ENCODE measurements at regions of chr22 and their contacts with region 1.

Region 1: GRCh38 chr22:24407278-24407665 is 20.1 kb upstream of the ADORA2A start:
- DNase-seq: no peak
- H3K4me3 ChIP-seq: no peak overlapping the region
- CTCF ChIP-seq: no peak

Region 2: GRCh38 chr22:24315367-24315966 is 91.8 kb before region 1 on chr22:
- in situ Hi-C with region 1: no loop called
- DNase-seq: peak; percentile 69
- H3K4me3 ChIP-seq: no peak overlapping the region
- CTCF ChIP-seq: no peak

Region 3: GRCh38 chr22:24355574-24355973 is 51.7 kb before region 1 on chr22:
- in situ Hi-C with region 1: no loop called
- DNase-seq: no peak
- H3K4me3 ChIP-seq: no peak overlapping the region
- CTCF ChIP-seq: no peak

Region 4: DNA sequence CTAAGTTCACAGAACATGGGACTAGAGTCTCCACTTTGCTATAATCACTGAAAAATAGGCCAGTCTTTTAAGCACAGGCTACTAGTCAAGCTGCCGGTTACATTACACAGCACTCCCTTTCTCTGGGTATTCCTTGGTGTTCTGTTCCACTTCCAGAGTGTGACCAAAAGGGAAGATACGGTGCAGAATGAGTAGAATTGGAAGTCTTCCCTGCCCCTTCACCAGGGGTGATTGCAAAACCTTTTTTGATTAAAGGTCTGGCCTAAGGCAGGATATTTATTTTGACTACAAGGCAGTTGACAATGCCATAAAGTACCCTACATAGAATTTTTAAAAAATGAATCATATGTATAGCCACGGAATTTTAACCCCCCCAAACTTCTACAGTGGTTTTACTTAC is 39.4 kb before region 1 on chr22:
- in situ Hi-C with region 1: no loop called
- DNase-seq: no peak
- H3K4me3 ChIP-seq: no peak overlapping the region
- CTCF ChIP-seq: no peak

Region 5: DNA sequence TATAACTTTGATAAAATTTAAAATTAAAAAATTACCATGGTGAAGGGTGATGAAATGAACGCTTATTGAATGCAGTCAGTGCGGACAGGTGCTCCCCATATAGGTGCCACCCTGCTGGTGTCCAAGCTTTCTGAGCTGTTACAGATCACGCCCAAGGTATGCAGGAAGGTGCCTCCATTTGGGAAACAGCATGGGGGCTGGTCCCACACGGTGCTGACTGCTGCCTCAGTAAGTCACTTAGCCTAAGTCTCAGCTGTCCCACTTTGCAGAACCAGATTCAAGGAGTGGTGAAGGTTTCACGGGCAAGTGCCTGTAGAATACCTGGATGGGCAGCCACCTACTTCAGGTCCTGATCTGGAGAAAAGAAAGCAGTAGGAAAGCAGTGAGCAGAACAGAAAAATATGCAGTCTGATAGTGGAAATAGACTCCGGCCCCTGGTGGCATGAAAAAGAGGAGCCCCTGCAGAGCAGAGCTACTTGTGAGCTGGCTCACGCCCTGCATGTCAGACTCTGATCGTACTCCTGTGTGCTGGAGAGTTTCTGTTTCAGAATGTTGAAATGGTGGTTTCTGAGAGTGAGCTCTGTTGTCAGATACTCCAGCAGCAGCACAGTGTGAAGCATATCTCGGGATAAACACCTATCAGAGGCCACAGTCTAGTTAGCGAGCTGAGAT is 53.3 kb after region 1 on chr22:
- in situ Hi-C with region 1: loop called (anchors 5 kb)
- DNase-seq: peak; percentile 16
- H3K4me3 ChIP-seq: no peak overlapping the region
- CTCF ChIP-seq: peak; percentile 18